Activated CD8-positive, alpha-beta T cell treated with anti-CD3 and anti-CD28 coated beads for 36 hours (primary cell): ENCODE measurements at regions of chr6 and their contacts with region 1.

Region 1: DNA sequence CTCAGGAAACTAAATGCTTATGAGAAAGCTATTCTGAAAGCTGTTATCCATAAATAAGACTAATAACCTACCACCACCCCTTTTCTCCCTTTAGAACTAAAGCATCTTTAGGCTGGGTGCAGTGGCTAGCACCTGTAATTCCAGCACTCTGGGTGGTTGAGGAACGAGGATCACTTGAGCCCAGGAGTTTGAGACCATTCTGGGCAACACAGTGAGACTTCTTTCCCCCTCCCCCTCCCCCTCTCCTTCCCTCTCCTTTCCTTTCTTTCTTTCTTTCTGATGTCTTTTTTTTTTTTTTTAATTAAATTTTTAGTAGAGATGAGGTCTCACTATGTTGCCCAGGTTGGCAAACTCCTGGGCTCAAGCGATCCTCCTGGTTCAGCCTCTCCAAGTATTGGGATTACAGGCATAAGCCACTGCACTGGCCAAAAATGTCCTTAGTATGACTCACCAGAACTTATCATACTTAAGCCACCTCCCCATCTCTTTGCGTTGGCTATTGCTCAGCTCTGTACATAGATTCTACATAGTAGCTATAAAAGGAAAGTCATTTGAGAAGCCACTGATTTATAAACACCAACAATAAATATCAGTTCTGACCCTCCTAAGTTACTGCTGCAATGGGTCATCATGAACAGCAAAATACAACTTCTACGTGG is 54.8 kb upstream of the SPDEF start:
- DNase-seq: no peak
- ATAC-seq: no peak
- H3K4me3 Mint-ChIP-seq: no peak overlapping the region
- H3K27ac Mint-ChIP-seq: no peak overlapping the region
- H3K4me1 Mint-ChIP-seq: peaks cover 13% of the 10 kb centered on the region
- H3K27me3 Mint-ChIP-seq: no peaks in the 10 kb centered on the region
- CTCF ChIP-seq: no peak

Region 2: DNA sequence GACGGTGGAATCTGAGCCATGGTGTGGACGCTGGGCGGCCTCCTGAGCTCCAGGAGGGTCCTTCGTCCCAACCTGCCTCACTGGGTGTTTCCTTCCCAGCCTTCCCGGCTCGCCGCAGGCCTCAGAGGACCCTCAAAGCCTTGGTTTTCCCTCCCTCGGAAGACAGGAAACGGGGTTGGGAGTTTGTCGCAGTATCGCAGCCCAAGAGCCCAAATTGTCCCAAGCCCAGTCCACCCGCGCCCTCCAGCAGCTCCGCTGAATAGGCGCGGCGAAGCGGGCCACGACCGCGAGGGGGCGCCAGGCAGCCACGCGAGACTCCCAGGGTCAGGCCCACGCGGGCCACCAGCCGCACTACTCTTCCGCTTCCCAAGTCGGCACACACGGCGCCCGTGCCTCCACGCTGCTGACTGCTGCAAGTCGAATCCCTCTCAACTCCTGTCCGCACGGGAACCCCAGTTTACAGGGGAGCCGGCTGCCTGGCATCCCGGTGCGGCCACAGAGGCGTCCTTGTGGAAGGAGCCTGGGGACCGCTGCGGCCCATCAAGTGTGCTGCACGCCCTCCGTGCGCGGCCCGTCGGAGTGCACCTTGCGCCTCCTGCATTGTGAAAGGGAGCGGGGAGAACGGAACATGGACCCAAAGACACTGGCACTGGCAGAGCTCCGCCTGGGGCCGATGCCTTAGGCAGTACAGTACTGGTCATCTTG is 414.7 kb before region 1 on chr6:
- CTCF ChIA-PET with region 1: interaction called, 13 read pairs
- POLR2A ChIA-PET with region 1: no interaction called
- intact Hi-C with region 1: no loop called
- DNase-seq: peak; percentile 90
- ATAC-seq: peak; percentile 97
- H3K4me3 Mint-ChIP-seq: peak overlapping the region; percentile 71
- H3K27ac Mint-ChIP-seq: peak overlapping the region; percentile 67
- H3K4me1 Mint-ChIP-seq: peaks cover 10% of the 10 kb centered on the region
- H3K27me3 Mint-ChIP-seq: no peaks in the 10 kb centered on the region
- CTCF ChIP-seq: peak; percentile 99

Region 3: DNA sequence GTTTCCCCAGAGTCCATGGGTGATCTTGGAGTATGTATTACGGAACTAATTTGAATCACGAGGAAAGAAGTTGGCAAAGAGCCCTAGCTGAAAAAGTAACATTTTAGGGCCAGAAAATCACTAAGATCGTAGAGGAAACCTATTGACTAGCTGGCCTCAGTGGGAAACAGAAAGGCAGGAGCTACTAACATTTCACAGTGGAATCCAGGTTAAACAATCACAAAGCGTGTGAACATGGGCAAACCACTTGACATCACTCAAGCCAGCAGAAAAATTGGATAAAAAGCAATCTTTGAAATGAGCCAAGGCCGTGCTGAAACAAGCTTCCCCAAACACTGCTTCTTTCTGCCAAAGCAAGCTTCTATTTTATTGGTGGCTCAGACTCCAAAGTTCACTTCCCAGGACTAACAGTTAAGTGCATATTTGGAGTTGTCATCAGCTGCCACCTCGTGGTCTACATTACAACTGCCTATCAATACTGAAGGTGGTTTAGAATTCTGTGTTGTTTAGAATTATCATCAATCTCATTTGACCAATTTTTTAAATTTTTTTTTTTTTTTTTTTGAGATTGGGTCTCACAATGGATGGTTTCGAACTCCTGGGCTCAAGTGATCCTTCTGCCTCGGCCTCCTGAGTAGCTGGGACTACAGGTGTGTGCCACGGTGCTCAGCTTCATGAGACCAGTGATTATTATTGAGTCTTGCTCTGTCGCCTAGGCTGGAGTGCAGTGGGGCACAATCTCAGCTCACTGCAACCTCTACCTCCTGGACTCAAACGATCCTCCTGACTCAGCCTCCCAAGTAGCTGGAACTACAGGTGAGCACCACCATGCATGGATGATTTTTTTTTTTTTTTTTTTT is 195.7 kb before region 1 on chr6:
- CTCF ChIA-PET with region 1: interaction called, 11 read pairs
- POLR2A ChIA-PET with region 1: interaction called, 3 read pairs
- intact Hi-C with region 1: no loop called
- DNase-seq: peak; percentile 53
- ATAC-seq: peak; percentile 61
- H3K4me3 Mint-ChIP-seq: no peak overlapping the region
- H3K27ac Mint-ChIP-seq: peak overlapping the region; percentile 30
- H3K4me1 Mint-ChIP-seq: peaks cover 14% of the 10 kb centered on the region
- H3K27me3 Mint-ChIP-seq: no peaks in the 10 kb centered on the region
- CTCF ChIP-seq: peak; percentile 11

Region 4: DNA sequence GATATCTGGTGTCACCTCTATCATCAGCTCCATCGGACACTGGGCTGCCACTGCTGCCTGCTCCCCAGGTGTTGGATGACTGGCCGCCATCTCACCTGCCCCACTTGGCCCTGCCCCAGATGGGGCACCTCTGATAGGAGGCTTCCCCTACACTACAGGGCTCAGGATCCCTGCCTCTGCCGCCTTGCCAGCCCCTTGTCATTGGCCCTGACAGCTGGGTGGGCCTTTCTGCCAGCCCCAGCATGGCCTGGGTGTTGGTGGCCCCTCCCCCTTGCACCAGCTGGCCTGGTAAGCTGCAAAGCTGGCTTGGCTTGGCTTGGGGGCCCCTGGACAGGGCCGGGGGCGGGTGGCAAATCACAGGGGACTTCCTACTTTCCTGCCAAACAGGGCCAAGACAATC is 134.5 kb before region 1 on chr6:
- CTCF ChIA-PET with region 1: interaction called, 11 read pairs
- POLR2A ChIA-PET with region 1: no interaction called
- intact Hi-C with region 1: no loop called
- DNase-seq: no peak
- ATAC-seq: no peak
- H3K4me3 Mint-ChIP-seq: no peak overlapping the region
- H3K27ac Mint-ChIP-seq: no peak overlapping the region
- H3K4me1 Mint-ChIP-seq: no peaks in the 10 kb centered on the region
- H3K27me3 Mint-ChIP-seq: no peaks in the 10 kb centered on the region
- CTCF ChIP-seq: no peak

Region 5: GRCh38 chr6:34580707-34581560 is 30.0 kb before region 1 on chr6:
- CTCF ChIA-PET with region 1: interaction called, 10 read pairs
- POLR2A ChIA-PET with region 1: no interaction called
- intact Hi-C with region 1: no loop called
- DNase-seq: no peak
- ATAC-seq: no peak
- H3K4me3 Mint-ChIP-seq: no peak overlapping the region
- H3K27ac Mint-ChIP-seq: no peak overlapping the region
- H3K4me1 Mint-ChIP-seq: no peaks in the 10 kb centered on the region
- H3K27me3 Mint-ChIP-seq: no peaks in the 10 kb centered on the region
- CTCF ChIP-seq: no peak